ENCODE measurements at regions of chr1 and their contacts with region 1.

Region 1: GRCh38 chr1:155063550-155064110 is at the start of gene EFNA4:
- DNase-seq: peak; percentile 73
- ATAC-seq: peak; percentile 83
- H3K4me3 Mint-ChIP-seq: peak within 1 kb of the TSS; percentile 83
- H3K27ac Mint-ChIP-seq: peak within 1 kb of the TSS; percentile 67
- H3K4me1 Mint-ChIP-seq: peaks cover 50% of the 10 kb centered on the region
- H3K27me3 Mint-ChIP-seq: no peaks in the 10 kb centered on the region
- CTCF ChIP-seq: no peak
- total RNA-seq, gene EFNA4: 7.8 and 9.5 TPM in 2 replicates

Region 2: GRCh38 chr1:154479764-154480421 is 583.7 kb before region 1 on chr1:
- CTCF ChIA-PET with region 1: interaction called, 5 read pairs
- POLR2A ChIA-PET with region 1: no interaction called
- intact Hi-C with region 1: loop called (anchors 1 kb)
- DNase-seq: no peak
- ATAC-seq: peak; percentile 95
- H3K4me3 Mint-ChIP-seq: no peak overlapping the region
- H3K27ac Mint-ChIP-seq: no peak overlapping the region
- H3K4me1 Mint-ChIP-seq: peaks cover 6% of the 10 kb centered on the region
- H3K27me3 Mint-ChIP-seq: no peaks in the 10 kb centered on the region
- CTCF ChIP-seq: peak; percentile 86

Region 3: DNA sequence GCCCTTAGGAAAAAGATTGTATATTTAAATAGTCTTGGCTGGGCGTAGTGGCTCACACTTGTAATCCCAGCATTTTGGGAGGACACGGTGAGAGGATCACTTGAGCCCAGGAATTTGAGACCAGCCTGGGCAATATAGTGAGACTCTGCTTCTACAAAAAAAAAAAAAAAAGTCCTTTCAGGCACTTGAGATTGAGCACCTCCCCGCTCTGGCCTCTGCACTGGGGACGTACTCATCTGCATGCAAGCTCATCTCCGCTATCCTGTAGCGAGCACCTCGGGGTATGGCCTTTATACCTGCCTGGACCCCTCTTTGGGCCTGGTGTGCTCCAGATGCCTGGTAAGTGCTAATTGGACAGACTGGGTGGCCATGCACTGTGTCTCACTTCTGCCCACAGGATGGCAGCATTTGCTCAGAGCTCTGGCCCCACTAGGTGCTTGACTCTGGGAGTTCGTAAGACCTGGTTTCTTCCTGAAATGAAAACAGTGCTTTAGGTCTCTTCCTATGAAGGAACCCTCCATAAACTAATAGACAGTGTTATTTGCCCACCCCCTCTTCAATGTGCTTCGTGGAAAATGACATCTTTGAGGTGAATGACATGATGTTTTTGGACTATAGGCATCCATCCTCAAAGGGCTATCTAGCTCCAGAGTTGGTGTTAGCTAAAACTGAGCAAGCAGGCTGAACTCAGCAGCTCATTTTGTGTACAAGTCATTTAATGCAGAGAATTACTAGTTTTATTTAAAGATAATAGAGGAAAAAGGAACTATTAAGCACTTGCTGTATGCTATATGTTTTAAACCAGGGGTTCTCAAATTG is 394.0 kb before region 1 on chr1:
- CTCF ChIA-PET with region 1: interaction called, 3 read pairs
- POLR2A ChIA-PET with region 1: no interaction called
- intact Hi-C with region 1: loop called (anchors 1 kb)
- DNase-seq: peak; percentile 37
- ATAC-seq: peak; percentile 98
- H3K4me3 Mint-ChIP-seq: no peak overlapping the region
- H3K27ac Mint-ChIP-seq: no peak overlapping the region
- H3K4me1 Mint-ChIP-seq: no peaks in the 10 kb centered on the region
- H3K27me3 Mint-ChIP-seq: no peaks in the 10 kb centered on the region
- CTCF ChIP-seq: no peak

Region 4: DNA sequence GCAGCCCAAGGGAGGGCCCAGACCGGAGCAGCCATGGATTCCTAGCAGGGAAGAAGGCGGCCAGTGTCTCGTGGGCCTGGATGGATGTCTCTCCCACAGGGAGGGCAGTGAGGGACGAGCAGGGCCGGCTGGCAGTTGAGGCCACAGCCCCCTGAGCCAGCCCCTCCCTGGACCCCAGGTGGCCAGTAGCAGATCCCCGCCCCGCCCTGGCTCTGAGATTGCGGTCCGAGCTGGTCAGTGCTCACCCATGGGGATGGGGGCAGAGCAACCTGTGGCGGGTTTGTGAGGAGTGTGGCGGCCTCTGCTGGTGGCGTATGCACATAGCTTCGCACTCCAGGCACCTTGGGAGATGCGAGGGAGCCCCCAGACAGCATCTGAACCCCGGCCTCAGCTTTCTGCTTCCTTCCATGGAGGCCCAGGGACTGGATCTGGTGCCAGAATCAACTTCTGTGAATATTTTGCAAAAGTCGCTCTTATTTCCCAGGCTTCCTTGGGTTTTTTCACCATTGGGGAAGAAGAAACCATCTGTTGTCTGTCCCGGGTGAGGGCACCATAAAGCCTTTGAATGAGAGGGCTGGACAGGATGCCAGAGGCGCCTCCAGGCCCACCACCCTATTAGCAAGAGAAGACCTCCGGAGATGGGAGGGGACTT is 185.1 kb before region 1 on chr1:
- CTCF ChIA-PET with region 1: interaction called, 5 read pairs
- POLR2A ChIA-PET with region 1: no interaction called
- intact Hi-C with region 1: loop called (anchors 1 kb)
- DNase-seq: peak; percentile 64
- ATAC-seq: peak; percentile 99
- H3K4me3 Mint-ChIP-seq: no peak overlapping the region
- H3K27ac Mint-ChIP-seq: no peak overlapping the region
- H3K4me1 Mint-ChIP-seq: no peaks in the 10 kb centered on the region
- H3K27me3 Mint-ChIP-seq: no peaks in the 10 kb centered on the region
- CTCF ChIP-seq: no peak

Region 5: GRCh38 chr1:155001675-155002463 is 61.8 kb before region 1 on chr1:
- CTCF ChIA-PET with region 1: interaction called, 4 read pairs
- POLR2A ChIA-PET with region 1: interaction called, 4 read pairs
- intact Hi-C with region 1: loop called (anchors 2 kb)
- DNase-seq: peak; percentile 94
- ATAC-seq: peak; percentile 81
- H3K4me3 Mint-ChIP-seq: peak overlapping the region; percentile 94
- H3K27ac Mint-ChIP-seq: peak overlapping the region; percentile 95
- H3K4me1 Mint-ChIP-seq: peaks cover 51% of the 10 kb centered on the region
- H3K27me3 Mint-ChIP-seq: no peaks in the 10 kb centered on the region
- CTCF ChIP-seq: no peak

Region 6: GRCh38 chr1:155044812-155045690 is 18.6 kb before region 1 on chr1:
- CTCF ChIA-PET with region 1: interaction called, 101 read pairs
- POLR2A ChIA-PET with region 1: interaction called, 8 read pairs
- intact Hi-C with region 1: loop called (anchors 1 kb)
- DNase-seq: peak; percentile 22
- ATAC-seq: peak; percentile 96
- H3K4me3 Mint-ChIP-seq: no peak overlapping the region
- H3K27ac Mint-ChIP-seq: no peak overlapping the region
- H3K4me1 Mint-ChIP-seq: peaks cover 4% of the 10 kb centered on the region
- H3K27me3 Mint-ChIP-seq: no peaks in the 10 kb centered on the region
- CTCF ChIP-seq: peak; percentile 58

Region 7: DNA sequence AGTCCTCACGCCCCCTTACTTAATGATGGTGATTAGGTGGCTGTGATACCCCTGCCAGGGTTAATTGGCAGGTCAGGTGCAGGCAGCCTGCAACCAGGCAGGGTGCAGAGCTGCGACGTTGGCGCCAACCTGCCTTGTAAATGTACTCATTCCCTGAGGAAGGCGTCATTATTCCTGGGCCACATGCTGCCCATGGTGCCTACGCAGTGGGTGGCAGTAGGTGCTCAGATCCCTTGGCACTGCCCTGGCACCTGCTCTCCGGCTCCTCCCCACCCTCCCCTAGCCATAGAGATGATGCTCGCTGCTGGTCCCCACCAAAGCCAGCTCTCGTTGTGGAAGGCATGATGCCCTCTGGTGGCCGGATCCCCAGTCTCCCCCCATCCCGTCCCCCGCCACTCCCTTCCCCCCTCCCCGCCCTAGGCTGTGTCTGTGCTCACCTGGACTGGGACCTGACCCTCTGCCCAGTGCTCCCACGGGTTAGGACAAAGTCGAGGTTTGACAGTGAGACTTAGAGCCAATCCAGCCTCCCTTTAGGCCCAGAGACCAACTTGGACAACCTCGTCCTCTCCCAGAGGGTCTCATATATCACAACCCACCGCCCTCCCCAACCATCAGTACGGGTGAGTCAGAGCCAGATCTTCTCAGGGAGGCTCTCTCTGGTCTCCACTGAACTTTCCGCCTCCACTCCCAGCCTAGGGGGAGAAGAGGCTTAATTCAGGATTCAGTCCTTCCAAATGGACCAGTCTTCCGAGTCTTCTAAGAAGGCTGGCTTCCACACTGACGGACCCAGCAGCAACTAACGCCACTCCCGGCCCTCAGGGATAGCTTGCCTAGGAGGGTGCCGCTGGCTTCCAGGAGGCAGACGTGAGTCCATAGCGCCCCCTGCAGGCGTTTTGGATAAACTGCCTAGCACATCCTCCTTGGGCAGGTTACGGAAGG is 103.8 kb after region 1 on chr1:
- CTCF ChIA-PET with region 1: interaction called, 9 read pairs
- POLR2A ChIA-PET with region 1: interaction called, 4 read pairs
- intact Hi-C with region 1: loop called (anchors 1 kb)
- DNase-seq: peak; percentile 80
- ATAC-seq: peak; percentile 82
- H3K4me3 Mint-ChIP-seq: peak overlapping the region; percentile 80
- H3K27ac Mint-ChIP-seq: peak overlapping the region; percentile 72
- H3K4me1 Mint-ChIP-seq: peaks cover 25% of the 10 kb centered on the region
- H3K27me3 Mint-ChIP-seq: no peaks in the 10 kb centered on the region
- CTCF ChIP-seq: no peak